ENCODE measurements at regions of chr11 and their contacts with region 1.

Region 1: DNA sequence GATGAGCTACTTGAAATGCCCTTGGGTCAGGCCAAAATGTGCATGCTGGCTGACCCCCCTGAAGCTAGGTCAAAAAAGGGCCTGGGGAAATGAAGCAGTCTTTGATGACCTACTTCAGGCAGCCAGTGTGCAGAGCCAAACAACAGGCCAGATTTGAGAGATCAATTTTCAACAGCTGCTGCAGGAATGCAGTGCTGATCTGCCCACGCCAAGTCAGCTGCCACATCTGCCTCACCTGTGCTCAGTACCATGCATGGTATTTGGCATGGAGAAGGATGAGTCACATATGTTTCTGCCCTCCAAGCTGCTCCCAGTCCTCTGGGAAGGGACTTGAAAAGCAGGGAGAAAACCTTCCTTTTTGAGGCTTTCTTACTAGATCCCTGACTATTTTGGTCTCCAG is 35.8 kb downstream of the MTNR1B start:
- DNase-seq: no peak

Region 2: DNA sequence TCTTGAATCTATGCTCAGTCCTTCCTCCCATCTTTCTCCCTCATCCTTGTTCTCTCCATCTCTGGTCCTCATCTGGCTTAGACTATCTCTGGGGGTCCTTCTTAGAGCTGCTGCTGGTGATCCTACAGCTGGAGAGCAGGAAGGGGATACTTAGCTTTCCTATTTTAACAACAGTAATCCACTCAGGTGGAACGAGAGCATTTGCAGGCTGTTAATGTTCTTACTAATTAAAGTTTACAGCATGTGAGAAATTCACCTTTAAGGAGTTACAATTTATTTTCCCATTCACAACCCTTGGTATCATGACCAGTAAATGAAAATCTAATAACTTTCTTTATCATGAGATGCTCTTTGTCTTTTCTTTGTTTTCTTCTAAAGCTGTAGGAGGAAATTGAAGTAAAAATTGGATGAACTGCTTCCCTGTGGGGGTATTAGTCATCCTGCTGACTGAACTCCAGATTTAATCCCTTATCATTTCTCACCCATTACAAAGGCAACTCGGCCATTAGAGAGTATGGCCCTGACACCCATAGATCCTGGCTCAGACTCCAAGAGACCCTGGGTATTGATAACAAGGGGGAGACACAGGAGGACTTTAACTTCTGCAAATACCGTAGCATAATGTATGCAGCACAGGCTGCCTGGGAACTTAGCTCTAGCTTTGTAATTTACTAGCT is 73.4 kb before region 1 on chr11:
- intact Hi-C with region 1: no loop called
- DNase-seq: no peak

Region 3: GRCh38 chr11:93063100-93063499 is 57.9 kb after region 1 on chr11:
- intact Hi-C with region 1: loop called in 1 of 2 experiments (anchors 2 kb)
- DNase-seq: no peak